HEK293 (cell line): ENCODE measurements at regions of chr2 and their contacts with region 1.

Region 1: GRCh38 chr2:120680136-120680761 is 55.4 kb upstream of the GLI2 start:
- H3K4me3 ChIP-seq: no peak overlapping the region
- H3K27ac ChIP-seq: no peak overlapping the region
- H3K4me1 ChIP-seq: no peaks in the 10 kb centered on the region
- CTCF ChIP-seq: peak; percentile 87

Region 2: GRCh38 chr2:120330946-120331822 is 349.1 kb before region 1 on chr2:
- CTCF ChIA-PET with region 1: interaction called, 10 read pairs
- POLR2A ChIA-PET with region 1: no interaction called
- H3K4me3 ChIP-seq: no peak overlapping the region
- H3K27ac ChIP-seq: no peak overlapping the region
- H3K4me1 ChIP-seq: no peaks in the 10 kb centered on the region
- CTCF ChIP-seq: no peak

Region 3: DNA sequence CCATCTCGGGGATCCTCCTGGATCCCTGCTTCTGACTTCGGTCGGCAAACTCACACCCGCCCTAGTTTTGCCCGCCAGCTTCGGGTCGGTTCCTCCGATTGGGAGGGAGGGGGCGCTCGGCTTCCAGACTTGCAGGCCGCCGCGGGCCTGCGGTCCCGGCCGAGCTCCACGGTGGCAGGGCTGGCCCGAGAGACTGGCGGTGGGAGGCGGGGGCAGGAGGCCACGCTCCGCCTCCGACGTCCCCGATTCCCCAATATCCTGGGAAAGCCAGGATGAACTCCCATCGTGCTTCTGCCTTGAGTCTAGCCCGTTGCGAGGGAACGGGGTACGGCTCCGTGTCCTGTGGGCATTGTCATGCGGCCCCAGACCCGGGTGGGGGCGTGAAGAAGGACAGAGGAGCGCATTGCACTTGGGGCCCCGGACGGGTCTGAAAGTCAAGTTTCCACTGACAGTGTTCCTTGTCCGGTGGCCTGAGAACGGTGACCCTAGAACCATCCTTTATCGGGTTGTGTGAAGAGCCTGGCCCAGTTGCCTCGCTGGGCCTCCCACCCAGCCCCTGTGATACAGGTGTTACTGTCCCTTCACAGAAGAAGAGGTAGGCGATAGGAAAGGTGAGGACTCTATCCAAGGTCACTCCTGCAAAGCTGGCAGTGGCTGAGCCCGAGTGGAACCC is 336.7 kb before region 1 on chr2:
- CTCF ChIA-PET with region 1: interaction called, 25 read pairs
- POLR2A ChIA-PET with region 1: interaction called, 3 read pairs
- H3K4me3 ChIP-seq: no peak overlapping the region
- H3K27ac ChIP-seq: no peak overlapping the region
- H3K4me1 ChIP-seq: peaks cover 13% of the 10 kb centered on the region
- CTCF ChIP-seq: peak; percentile 90